OCI-LY7 (cell line): ENCODE measurements at regions of chr10 and their contacts with region 1.

Region 1: DNA sequence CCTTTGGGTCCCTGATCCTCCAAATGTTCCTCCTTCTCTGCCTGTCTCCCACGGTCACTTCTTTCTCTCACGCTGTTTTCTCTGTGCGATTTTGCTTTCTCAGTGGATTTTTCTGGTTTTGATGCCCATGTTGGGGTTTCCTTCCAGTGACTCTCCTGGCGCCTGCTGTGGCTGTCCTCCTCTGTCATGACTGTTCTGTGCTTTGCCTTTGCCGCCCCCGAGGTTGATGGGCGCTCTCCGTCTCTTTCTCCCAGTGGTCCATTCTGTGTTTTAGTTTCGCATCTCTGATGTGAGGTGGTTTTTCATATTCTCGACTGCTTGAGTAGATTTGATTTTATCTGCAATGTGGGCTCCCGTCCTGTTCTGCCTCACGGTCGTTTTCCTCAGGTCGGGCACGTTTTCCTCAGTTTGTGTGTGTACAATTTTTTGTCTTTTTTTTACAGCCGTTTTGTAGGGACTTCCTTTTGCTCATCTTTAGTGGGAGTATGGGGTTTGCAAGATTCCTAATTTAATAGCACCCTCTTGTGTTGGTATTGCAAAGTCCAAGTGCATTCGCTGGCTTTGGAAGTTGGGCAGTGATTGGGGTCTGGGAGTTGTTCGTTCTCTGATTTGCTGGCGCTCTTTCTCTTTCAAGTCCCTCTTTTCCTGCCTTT is 100.0 kb downstream of the INPP5A start:
- DNase-seq: peak; percentile 69
- H3K4me3 ChIP-seq: no peak overlapping the region
- H3K27ac ChIP-seq: no peak overlapping the region
- H3K4me1 ChIP-seq: no peaks in the 10 kb centered on the region
- CTCF ChIP-seq: peak; percentile 91

Region 2: GRCh38 chr10:132458593-132459300 is 178.9 kb before region 1 on chr10:
- CTCF ChIA-PET with region 1: no interaction called
- POLR2A ChIA-PET with region 1: interaction called, 3 read pairs
- intact Hi-C with region 1: loop called (anchors 1 kb)
- DNase-seq: peak; percentile 54
- H3K4me3 ChIP-seq: no peak overlapping the region
- H3K27ac ChIP-seq: no peak overlapping the region
- H3K4me1 ChIP-seq: no peaks in the 10 kb centered on the region
- CTCF ChIP-seq: peak; percentile 95